ENCODE measurements at regions of chr9 and their contacts with region 1.

Region 1: GRCh38 chr9:124852829-124853531 is at the start of gene WDR38:
- DNase-seq: peak; percentile 65
- H3K4me3 ChIP-seq: peak within 1 kb of the TSS; percentile 2 to 38 (median 32)
- H3K27ac ChIP-seq: no peak within 1 kb of the TSS
- H3K4me1 ChIP-seq: peaks cover 3% of the 10 kb centered on the region
- H3K27me3 ChIP-seq: peaks cover 0 to 2% of the 10 kb centered on the region in 2 experiments
- CTCF ChIP-seq: peak; percentile 80 to 94
- POLR2A ChIP-seq: no peak
- total RNA-seq, gene WDR38: not detected in 2 replicates

Region 2: DNA sequence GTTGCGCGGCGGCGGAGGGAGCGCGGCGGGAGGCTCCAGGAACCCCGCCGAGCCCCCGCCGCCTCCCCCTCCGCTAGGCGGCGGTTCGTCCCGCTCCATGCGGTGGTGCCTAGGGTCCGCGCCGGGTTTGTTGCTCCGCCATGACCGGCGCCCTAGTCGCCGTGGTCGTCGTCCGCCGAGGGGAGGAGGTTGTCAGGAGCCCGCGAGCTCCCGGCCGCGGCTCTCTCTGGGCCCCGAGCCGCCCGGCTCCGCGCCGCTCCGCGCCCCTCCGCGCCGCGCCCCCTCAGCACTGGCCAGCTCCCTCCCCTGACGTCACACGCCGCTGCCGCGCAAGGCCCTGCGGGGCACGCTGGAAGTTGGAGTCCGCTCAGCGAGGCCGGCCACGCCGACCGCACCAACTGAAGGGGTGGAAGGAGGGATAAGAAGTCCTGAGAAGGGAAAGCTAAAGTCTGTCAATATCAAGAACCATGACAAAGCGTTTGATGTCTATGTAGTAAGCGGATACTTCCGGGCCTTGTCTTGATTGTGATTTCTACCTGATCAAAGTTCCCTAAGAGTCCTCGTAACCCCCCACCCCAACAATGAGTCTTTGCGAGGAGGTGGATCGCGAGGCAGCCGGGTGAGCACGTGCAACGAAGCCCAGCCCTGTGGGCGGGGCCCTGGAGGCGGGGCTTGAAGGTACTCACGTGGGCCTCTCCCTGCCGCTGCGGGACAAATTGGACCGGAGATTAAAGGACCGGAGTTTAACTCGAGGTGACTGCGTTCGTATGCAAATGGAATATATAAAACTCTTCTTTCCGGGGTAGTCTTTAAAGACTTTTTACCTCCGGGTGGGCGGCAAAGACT is 81.7 kb before region 1 on chr9 and contains the start of gene NR6A1:
- CTCF ChIA-PET with region 1: interaction called, 967 read pairs
- POLR2A ChIA-PET with region 1: interaction called, 6 read pairs
- dilution Hi-C with region 1: no loop called
- intact Hi-C with region 1: loop called (anchors 1 kb)
- DNase-seq: peak; percentile 96
- H3K4me3 ChIP-seq: peak within 1 kb of the TSS; percentile 29 to 62 (median 54)
- H3K27ac ChIP-seq: peak within 1 kb of the TSS; percentile 69
- H3K4me1 ChIP-seq: peaks cover 10% of the 10 kb centered on the region
- H3K27me3 ChIP-seq: peaks cover 36 to 42% of the 10 kb centered on the region in 2 experiments
- CTCF ChIP-seq: peak; percentile 26 to 36
- POLR2A ChIP-seq: no peak
- total RNA-seq, gene NR6A1: 0.32 and 1.2 TPM in 2 replicates

Region 3: DNA sequence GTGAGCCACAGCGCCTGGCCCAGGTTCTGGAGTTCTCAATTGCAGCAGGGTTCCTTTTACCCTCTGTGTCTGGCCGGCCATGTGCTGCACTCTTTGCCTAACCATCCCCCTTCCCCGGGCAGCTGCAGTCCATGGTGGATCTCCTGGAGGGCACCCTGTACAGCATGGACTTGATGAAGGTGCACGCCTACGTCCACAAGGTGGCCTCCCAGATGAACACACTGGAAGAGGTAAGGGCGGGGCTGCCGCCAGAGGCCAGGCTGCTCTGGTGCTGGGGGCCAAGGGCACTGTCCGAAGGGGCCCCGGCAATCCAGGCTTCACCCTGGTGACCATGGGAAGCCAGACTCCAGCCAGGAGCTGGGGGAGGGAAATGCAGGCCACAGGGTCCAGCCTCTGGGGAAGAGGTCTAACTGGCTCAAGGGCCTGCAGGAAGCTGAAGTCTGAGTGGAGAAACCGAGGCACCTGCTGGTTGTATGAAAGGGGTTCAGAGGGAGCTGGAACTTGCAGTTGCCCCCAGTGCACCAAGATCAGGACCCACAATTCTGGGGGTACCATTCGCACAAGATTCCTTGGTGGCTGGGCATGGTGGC is 58.0 kb before region 1 on chr9:
- CTCF ChIA-PET with region 1: interaction called, 40 read pairs
- POLR2A ChIA-PET with region 1: no interaction called
- dilution Hi-C with region 1: no loop called
- intact Hi-C with region 1: no loop called
- DNase-seq: no peak
- H3K4me3 ChIP-seq: no peak overlapping the region
- H3K27ac ChIP-seq: no peak overlapping the region
- H3K4me1 ChIP-seq: peaks cover 11% of the 10 kb centered on the region
- H3K27me3 ChIP-seq: peaks cover 2 to 3% of the 10 kb centered on the region in 2 experiments
- CTCF ChIP-seq: no peak
- POLR2A ChIP-seq: no peak

Region 4: DNA sequence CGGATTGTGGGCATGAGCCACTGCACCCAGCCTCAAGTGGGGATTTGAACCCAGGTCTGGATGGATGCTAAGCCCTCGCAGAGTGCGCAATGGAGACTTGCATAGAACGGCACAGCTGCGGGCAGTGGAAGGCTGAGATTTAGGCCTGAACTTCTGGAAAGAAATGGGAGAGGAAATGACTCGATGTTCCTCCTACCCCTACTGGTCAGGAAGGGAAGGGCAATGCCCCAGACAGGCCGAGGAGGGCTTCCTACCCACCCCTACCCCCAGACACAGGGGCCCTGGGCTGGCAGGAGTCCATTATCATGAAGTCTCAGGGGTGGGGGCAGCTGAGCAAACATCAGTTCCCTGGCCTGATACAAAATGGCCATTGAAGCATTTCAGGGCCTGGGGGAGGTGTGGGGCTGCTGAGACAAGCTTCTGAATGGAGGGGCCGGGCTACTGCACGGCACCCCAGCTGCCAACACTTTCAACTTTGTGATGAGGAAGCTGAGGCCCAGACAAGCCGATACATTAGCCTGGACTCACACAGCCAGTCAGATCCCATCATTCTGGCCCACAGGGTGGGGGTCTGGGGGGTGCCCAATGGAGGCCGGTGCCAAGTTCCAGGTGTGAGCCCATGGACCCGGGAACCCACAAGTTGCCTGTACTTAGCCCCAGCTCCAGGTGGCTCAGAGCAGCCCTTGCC is 13.2 kb before region 1 on chr9:
- CTCF ChIA-PET with region 1: interaction called, 141 read pairs
- POLR2A ChIA-PET with region 1: no interaction called
- dilution Hi-C with region 1: no loop called
- intact Hi-C with region 1: no loop called
- DNase-seq: peak; percentile 62
- H3K4me3 ChIP-seq: no peak overlapping the region
- H3K27ac ChIP-seq: no peak overlapping the region
- H3K4me1 ChIP-seq: peaks cover 6% of the 10 kb centered on the region
- H3K27me3 ChIP-seq: no peaks in the 10 kb centered on the region
- CTCF ChIP-seq: peak; percentile 41 to 73
- POLR2A ChIP-seq: no peak

Region 5: DNA sequence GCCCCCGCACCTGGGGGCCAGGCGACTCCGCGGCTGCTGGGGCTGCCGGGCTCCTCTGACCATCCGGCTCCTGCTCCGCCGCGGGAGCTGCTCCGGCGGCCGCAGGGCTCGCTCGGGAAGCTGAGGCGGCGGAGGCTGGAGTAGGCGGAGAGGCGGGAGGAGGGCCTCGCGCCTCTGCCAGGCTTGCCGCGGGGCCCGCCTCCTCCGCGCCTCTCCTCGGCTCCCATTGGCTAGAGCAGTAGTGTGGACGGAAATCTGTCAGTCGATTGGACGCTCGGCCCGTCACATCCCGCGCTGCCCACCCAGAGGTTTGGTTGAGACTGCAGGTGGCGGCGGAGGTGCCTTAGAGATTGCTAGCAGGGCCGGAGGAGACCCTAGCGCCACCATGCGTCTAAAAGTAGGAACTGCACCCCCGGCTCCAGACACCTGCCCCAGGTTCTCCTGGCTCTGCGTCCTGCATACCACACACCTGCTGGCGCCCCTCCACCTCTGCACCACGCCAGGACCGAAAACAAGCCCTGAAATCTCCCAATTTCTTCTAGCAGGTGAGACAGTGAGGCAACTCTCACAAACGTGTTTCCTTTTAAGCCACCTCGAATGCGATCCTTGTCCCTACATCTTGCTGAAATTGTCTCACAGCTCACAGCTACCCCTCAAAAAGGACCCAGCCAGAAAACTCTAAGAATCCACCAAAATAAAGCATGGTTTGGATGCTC is 290.6 kb after region 1 on chr9 and contains the start of gene SCAI:
- CTCF ChIA-PET with region 1: interaction called, 8 read pairs
- POLR2A ChIA-PET with region 1: no interaction called
- dilution Hi-C with region 1: no loop called
- intact Hi-C with region 1: loop called (anchors 1 kb)
- DNase-seq: peak; percentile 99
- H3K4me3 ChIP-seq: peak within 1 kb of the TSS; percentile 19 to 74 (median 59)
- H3K27ac ChIP-seq: no peak within 1 kb of the TSS
- H3K4me1 ChIP-seq: peaks cover 6% of the 10 kb centered on the region
- H3K27me3 ChIP-seq: no peaks in the 10 kb centered on the region
- CTCF ChIP-seq: peak; percentile 94 to 99
- POLR2A ChIP-seq: peak; percentile 71
- total RNA-seq, gene SCAI: 6.9 and 9.3 TPM in 2 replicates

Region 6: GRCh38 chr9:125272697-125273096 is 419.7 kb after region 1 on chr9:
- CTCF ChIA-PET with region 1: no interaction called
- POLR2A ChIA-PET with region 1: no interaction called
- dilution Hi-C with region 1: no loop called
- intact Hi-C with region 1: no loop called
- DNase-seq: no peak
- H3K4me3 ChIP-seq: no peak overlapping the region
- H3K27ac ChIP-seq: no peak overlapping the region
- H3K4me1 ChIP-seq: no peaks in the 10 kb centered on the region
- H3K27me3 ChIP-seq: no peaks in the 10 kb centered on the region
- CTCF ChIP-seq: no peak
- POLR2A ChIP-seq: no peak